Endothelial cell of umbilical vein (primary cell): ENCODE measurements at regions of chrX and their contacts with region 1.

Region 1: DNA sequence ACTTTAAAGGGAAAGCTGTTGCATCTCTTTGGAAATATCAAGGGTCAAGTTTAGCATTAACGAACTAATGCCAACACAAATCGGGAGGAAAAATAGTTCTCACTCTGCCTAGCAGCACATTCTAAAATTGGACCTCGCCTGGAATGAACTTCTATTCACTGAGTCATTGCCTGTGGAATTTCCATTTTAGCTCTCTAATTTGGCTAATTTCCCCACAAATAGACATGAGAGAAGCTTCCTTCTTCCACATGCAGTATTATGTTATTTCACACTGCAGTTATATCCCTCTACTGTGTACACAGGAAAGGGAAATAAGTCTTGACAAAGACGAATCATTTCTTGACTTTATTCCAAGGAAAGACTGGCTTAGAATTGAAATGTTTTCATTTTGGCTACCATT is 9.3 kb downstream of the ZXDA start:
- DNase-seq: peak; percentile 90
- H3K4me3 ChIP-seq: no peak overlapping the region
- H3K27ac ChIP-seq: peak overlapping the region; percentile 69
- H3K4me1 ChIP-seq: peaks cover 30% of the 10 kb centered on the region
- H3K27me3 ChIP-seq: no peaks in the 10 kb centered on the region
- CTCF ChIP-seq: no peak
- POLR2A ChIP-seq: no peak

Region 2: GRCh38 chrX:57595381-57595811 is 305.6 kb before region 1 on chrX:
- CTCF ChIA-PET with region 1: no interaction called
- POLR2A ChIA-PET with region 1: no interaction called
- dilution Hi-C with region 1: no loop called
- intact Hi-C with region 1: loop called (anchors 2 kb)
- DNase-seq: peak; percentile 61
- H3K4me3 ChIP-seq: peak overlapping the region in 1 of 3 experiments; percentile 71
- H3K27ac ChIP-seq: peak overlapping the region; percentile 81
- H3K4me1 ChIP-seq: peaks cover 33% of the 10 kb centered on the region
- H3K27me3 ChIP-seq: no peaks in the 10 kb centered on the region
- CTCF ChIP-seq: no peak
- POLR2A ChIP-seq: no peak